AG04450 (cell line): ENCODE measurements at regions of chr11 and their contacts with region 1.

Region 1: GRCh38 chr11:74449369-74449931 is 17.9 kb downstream of the KCNE3 start:
- DNase-seq: peak; percentile 55
- H3K4me3 ChIP-seq: no peak overlapping the region
- H3K27ac ChIP-seq: no peak overlapping the region
- H3K27me3 ChIP-seq: peaks cover 7% of the 10 kb centered on the region
- CTCF ChIP-seq: peak; percentile 82

Region 2: GRCh38 chr11:74248469-74248868 is 201.0 kb before region 1 on chr11:
- CTCF ChIA-PET with region 1: interaction called, 172 read pairs
- POLR2A ChIA-PET with region 1: no interaction called
- DNase-seq: no peak
- H3K4me3 ChIP-seq: no peak overlapping the region
- H3K27ac ChIP-seq: no peak overlapping the region
- H3K27me3 ChIP-seq: no peaks in the 10 kb centered on the region
- CTCF ChIP-seq: no peak

Region 3: DNA sequence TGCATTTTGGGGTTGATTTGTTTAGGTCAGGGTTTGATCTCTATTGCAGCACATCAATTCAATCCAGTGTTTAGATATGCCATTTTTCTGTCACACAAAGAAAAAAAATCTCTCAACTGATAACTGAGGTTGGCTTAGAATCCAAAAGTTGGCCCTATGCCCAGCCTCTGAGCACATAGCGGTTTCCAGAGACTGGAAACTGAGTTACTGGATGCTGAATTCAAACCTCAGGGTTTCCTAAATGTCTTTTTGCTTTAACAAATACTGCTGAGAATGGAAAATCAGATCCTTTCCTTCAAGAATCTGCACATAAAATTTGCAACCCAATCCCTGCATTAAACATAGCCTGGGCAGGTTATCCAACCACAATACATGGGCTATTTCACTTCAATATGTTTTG is 142.0 kb before region 1 on chr11:
- CTCF ChIA-PET with region 1: no interaction called
- POLR2A ChIA-PET with region 1: no interaction called
- DNase-seq: no peak
- H3K4me3 ChIP-seq: no peak overlapping the region
- H3K27ac ChIP-seq: no peak overlapping the region
- H3K27me3 ChIP-seq: no peaks in the 10 kb centered on the region
- CTCF ChIP-seq: no peak

Region 4: DNA sequence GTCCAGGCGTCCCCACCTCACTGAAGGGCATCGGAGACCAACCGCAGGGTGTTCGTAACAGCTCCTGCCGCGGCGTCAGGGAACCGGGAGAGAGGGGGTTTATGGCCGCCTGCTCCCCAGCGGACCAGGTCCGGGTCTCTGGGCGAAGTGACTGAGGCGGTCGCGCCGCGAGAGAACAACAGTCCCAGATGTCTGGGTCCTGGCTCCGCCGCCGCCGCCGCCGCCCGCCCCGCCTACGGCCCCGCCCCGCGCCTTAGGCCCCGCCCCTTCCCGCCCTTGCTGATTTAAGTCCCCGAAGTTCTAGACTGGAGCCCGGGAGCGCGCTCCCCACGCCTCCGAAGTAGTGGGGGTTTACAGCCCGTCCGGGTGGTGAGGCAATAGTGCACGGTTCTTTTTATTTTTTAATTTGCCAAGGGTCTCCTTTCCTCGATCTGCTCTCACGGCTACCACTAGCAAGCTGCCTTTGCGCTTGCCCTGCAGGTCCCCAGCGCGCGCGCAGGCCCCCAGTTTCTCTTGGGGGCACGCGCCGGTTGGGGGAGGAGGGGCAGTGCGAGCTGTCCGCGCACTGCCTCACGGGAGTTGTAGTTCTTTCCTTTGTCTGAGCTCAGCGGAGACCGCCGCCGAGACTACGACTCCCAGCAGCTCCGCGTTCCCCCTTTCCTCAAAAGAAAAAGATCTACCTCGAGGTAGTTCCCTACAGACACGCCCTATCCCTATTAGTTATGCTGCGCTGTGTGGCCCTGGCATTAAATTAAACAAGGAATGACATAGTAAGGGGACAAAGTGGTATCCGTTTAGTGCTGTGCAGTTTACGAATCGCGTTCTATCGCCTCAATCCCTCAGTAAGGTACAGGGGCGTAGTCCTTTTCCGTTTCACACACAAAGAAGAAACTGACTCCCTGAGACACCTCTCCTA is 50.9 kb before region 1 on chr11 and contains the start of gene PGM2L1:
- CTCF ChIA-PET with region 1: interaction called, 61 read pairs
- POLR2A ChIA-PET with region 1: interaction called, 6 read pairs
- DNase-seq: peak; percentile 70
- H3K4me3 ChIP-seq: peak within 1 kb of the TSS; percentile 93
- H3K27ac ChIP-seq: peak within 1 kb of the TSS; percentile 68
- H3K27me3 ChIP-seq: no peaks in the 10 kb centered on the region
- CTCF ChIP-seq: no peak
- polyA plus RNA-seq, gene PGM2L1: 1.7 and 2.6 TPM in 2 replicates

Region 5: GRCh38 chr11:74462009-74462408 is 12.6 kb after region 1 on chr11:
- CTCF ChIA-PET with region 1: interaction called, 44 read pairs
- POLR2A ChIA-PET with region 1: no interaction called
- DNase-seq: no peak
- H3K4me3 ChIP-seq: no peak overlapping the region
- H3K27ac ChIP-seq: no peak overlapping the region
- H3K27me3 ChIP-seq: peaks cover 38% of the 10 kb centered on the region
- CTCF ChIP-seq: no peak

Region 6: GRCh38 chr11:74726547-74727182 is 277.2 kb after region 1 on chr11:
- CTCF ChIA-PET with region 1: interaction called, 20 read pairs
- POLR2A ChIA-PET with region 1: no interaction called
- DNase-seq: peak; percentile 75
- H3K4me3 ChIP-seq: no peak overlapping the region
- H3K27ac ChIP-seq: no peak overlapping the region
- H3K27me3 ChIP-seq: peaks cover 27% of the 10 kb centered on the region
- CTCF ChIP-seq: peak; percentile 99